ENCODE measurements at regions of chr7 and their contacts with region 1.

Region 1: GRCh38 chr7:12524794-12525386 is 45.6 kb upstream of the SCIN start:
- DNase-seq: no peak
- H3K4me3 Mint-ChIP-seq: no peak overlapping the region
- H3K27ac Mint-ChIP-seq: peak overlapping the region; percentile 45
- H3K4me1 Mint-ChIP-seq: no peaks in the 10 kb centered on the region
- H3K27me3 Mint-ChIP-seq: no peaks in the 10 kb centered on the region
- CTCF ChIP-seq: peak; percentile 59

Region 2: GRCh38 chr7:12570534-12571461 is 45.9 kb after region 1 on chr7 and contains the start of gene SCIN:
- CTCF ChIA-PET with region 1: interaction called, 11 read pairs
- intact Hi-C with region 1: loop called (anchors 2 kb)
- DNase-seq: peak; percentile 77
- H3K4me3 Mint-ChIP-seq: peak within 1 kb of the TSS; percentile 83
- H3K27ac Mint-ChIP-seq: peak within 1 kb of the TSS; percentile 76
- H3K4me1 Mint-ChIP-seq: peaks cover 33% of the 10 kb centered on the region
- H3K27me3 Mint-ChIP-seq: no peaks in the 10 kb centered on the region
- CTCF ChIP-seq: no peak
- total RNA-seq, gene SCIN: 22.6 and 28.3 TPM in 2 replicates

Region 3: GRCh38 chr7:13240349-13240748 is 715.5 kb after region 1 on chr7:
- CTCF ChIA-PET with region 1: no interaction called
- intact Hi-C with region 1: loop called (anchors 5 kb)
- DNase-seq: peak; percentile 5
- H3K4me3 Mint-ChIP-seq: no peak overlapping the region
- H3K27ac Mint-ChIP-seq: no peak overlapping the region
- H3K4me1 Mint-ChIP-seq: peaks cover 8% of the 10 kb centered on the region
- H3K27me3 Mint-ChIP-seq: no peaks in the 10 kb centered on the region
- CTCF ChIP-seq: no peak

Region 4: DNA sequence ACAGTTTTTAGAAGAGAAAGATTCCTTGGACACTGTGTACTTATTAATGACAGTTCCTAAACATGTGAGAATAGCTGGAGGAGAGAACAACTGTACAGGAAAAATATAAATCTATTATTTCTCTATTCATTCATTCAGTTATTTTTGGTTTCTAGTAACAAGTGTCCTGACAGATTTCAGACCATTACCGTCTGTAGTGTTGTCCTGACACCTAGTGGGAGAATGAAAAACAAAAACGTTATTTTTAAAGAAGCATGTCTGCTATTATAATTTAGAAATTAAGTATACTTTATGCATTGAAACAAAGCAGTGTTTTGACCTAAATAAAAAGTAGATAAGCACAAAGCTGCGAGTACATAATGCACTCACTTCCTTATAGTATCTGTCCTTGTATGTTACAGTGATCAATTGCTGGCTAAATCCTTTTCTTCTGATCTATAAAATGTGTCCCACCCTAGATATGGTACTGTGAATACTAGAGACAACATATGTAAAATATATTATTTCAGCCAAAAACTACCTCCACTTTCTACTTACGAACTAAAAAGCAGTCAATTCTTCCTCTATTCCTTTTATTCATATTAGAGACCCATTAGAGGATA is 738.1 kb after region 1 on chr7:
- CTCF ChIA-PET with region 1: no interaction called
- intact Hi-C with region 1: loop called (anchors 2 kb)
- DNase-seq: peak; percentile 25
- H3K4me3 Mint-ChIP-seq: no peak overlapping the region
- H3K27ac Mint-ChIP-seq: no peak overlapping the region
- H3K4me1 Mint-ChIP-seq: no peaks in the 10 kb centered on the region
- H3K27me3 Mint-ChIP-seq: peaks cover 12% of the 10 kb centered on the region
- CTCF ChIP-seq: peak; percentile 74